ENCODE measurements at regions of chr7 and their contacts with region 1.

Region 1: DNA sequence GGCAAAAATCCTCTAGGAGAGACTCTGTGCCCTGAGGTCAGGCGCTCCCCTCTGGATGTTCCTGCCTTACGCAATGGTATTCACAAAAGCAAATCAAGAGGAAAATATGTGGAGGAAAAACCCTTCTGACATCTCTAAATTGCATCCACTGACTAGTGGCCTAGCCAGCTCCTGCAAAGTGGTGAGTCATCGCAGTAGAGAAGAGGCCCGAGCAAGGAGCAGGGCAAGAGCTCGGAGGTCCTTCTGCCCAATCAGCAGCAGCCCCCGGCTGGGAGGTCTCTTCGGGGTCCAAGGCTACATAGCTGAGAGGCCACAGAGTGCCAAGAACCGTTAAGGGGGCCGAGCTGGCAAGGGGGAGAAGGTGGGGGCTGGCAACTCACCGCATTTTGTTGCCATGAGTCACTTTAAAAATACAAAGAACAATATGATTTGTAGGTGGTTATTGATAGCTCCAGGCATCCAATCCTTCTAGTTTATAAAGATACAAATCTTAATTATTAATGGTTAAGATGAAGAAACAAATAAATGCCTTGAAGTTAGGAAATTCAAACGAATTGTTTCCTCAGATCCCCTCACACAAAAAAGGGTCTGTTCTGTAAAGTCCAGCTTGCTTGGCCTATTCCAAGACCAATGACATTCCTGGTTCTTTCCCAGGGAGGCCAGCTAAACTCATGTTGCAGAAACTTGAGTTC is 161.6 kb downstream of the PKD1L1 start:
- DNase-seq: peak; percentile 99
- ATAC-seq: peak; percentile 92
- H3K4me3 ChIP-seq: no peak overlapping the region
- H3K27ac ChIP-seq: peak overlapping the region; percentile 94
- H3K4me1 ChIP-seq: peaks cover 26% of the 10 kb centered on the region
- H3K27me3 ChIP-seq: no peaks in the 10 kb centered on the region
- CTCF ChIP-seq: no peak
- POLR2A ChIP-seq: no peak
- RAD21 ChIP-seq: peak; percentile 34

Region 2: GRCh38 chr7:47600199-47601118 is 186.2 kb before region 1 on chr7:
- CTCF ChIA-PET with region 1: no interaction called
- POLR2A ChIA-PET with region 1: no interaction called
- dilution Hi-C with region 1: no loop called
- in situ Hi-C with region 1: no loop called
- intact Hi-C with region 1: loop called (anchors 5 kb)
- DNase-seq: peak; percentile 86
- ATAC-seq: peak; percentile 73
- H3K4me3 ChIP-seq: no peak overlapping the region
- H3K27ac ChIP-seq: peak overlapping the region; percentile 97
- H3K4me1 ChIP-seq: peaks cover 34% of the 10 kb centered on the region
- H3K27me3 ChIP-seq: no peaks in the 10 kb centered on the region
- CTCF ChIP-seq: no peak
- POLR2A ChIP-seq: peak; percentile 39
- RAD21 ChIP-seq: no peak

Region 3: DNA sequence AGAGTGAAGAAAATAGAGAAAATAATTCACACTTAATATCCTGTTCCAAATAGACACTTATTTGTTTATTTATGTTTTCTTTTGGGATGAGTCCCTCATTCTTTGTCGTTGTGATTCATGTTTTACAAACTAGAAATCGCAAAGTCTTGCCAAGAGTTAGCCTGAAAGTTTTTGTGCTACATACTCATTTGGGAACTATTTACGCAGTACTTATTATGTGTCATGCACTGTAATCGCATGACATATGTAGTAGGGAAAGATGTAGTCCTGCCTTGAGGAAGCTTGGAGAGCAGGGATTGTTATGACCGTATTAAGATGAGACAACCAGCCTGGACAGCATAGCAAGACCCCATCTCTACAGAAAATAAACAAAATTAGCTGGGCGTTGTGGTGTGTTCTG is 573.9 kb after region 1 on chr7:
- CTCF ChIA-PET with region 1: no interaction called
- POLR2A ChIA-PET with region 1: no interaction called
- dilution Hi-C with region 1: no loop called
- in situ Hi-C with region 1: no loop called
- intact Hi-C with region 1: no loop called
- DNase-seq: peak; percentile 19
- ATAC-seq: no peak
- H3K4me3 ChIP-seq: no peak overlapping the region
- H3K27ac ChIP-seq: no peak overlapping the region
- H3K4me1 ChIP-seq: no peaks in the 10 kb centered on the region
- H3K27me3 ChIP-seq: no peaks in the 10 kb centered on the region
- CTCF ChIP-seq: no peak
- POLR2A ChIP-seq: no peak
- RAD21 ChIP-seq: no peak